ENCODE measurements at regions of chr2 and their contacts with region 1.

Region 1: DNA sequence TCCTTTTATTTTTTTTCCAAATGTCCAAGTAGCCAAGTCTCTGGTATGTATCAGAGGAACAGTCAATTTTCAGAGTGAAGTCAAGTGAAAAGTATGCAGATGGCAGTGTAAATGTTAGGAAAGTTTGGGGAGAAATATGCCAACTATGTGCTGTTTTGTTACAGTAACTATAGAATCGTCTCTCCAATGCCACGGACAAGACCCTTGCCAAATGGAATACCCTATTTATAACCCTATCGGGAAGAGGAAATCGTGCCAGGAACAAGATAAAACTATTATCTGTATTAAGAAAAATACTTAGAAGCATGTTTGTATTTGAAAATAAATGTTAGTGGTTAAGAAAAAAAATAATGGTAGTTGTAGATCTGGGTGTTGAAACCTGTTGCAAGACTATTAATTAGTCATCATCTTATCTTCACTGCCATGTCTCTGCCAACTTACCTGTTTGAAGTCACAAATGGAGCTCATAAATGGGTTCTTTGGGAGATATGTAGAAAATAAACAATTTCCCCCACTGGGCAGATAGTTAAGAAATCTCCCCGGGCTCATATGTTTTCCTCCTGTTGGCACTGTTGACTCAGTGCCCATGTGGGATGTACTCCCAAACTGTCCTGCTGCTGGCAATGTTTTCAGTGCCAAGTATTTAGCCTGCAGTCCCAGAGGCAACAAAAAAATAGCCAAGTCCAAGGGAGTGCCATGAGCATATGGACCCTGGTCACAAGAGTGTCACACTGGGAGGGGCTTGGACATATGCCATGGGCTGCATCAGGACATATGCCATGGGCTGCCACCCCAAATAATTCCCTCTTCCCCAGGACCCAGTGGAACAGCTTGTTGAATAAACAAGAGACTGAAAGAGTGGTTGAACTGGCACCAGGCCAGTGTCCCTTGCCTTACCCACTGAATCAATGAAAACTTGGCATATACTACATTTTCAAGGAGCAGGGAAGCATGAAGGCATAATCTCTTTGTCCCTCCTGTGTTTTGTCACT is 366.9 kb downstream of the OSR1 start:
- DNase-seq: no peak
- H3K4me3 ChIP-seq: no peak overlapping the region
- H3K27ac ChIP-seq: no peak overlapping the region
- H3K4me1 ChIP-seq: peaks cover 0 to 22% (median 10%) of the 10 kb centered on the region in 3 donors
- H3K27me3 ChIP-seq: no peaks in the 10 kb centered on the region
- CTCF ChIP-seq: no peak
- POLR2A ChIP-seq: no peak

Region 2: GRCh38 chr2:18788592-18788991 is 202.9 kb before region 1 on chr2:
- intact Hi-C with region 1: no loop called
- DNase-seq: no peak
- H3K4me3 ChIP-seq: no peak overlapping the region
- H3K27ac ChIP-seq: no peak overlapping the region
- H3K4me1 ChIP-seq: peaks cover 0 to 12% (median 0%) of the 10 kb centered on the region in 3 donors
- H3K27me3 ChIP-seq: no peaks in the 10 kb centered on the region
- CTCF ChIP-seq: no peak
- POLR2A ChIP-seq: no peak

Region 3: GRCh38 chr2:19349911-19350677 is 358.6 kb after region 1 on chr2:
- intact Hi-C with region 1: loop called (anchors 10 kb)
- DNase-seq: no peak
- H3K4me3 ChIP-seq: peak overlapping the region in 2 of 4 donors; percentile 21 to 49
- H3K27ac ChIP-seq: peak overlapping the region in 2 of 4 donors; percentile 17 to 51
- H3K4me1 ChIP-seq: peaks cover 7 to 39% (median 7%) of the 10 kb centered on the region in 3 donors
- H3K27me3 ChIP-seq: peaks cover 0 to 58% (median 3%) of the 10 kb centered on the region in 4 donors
- CTCF ChIP-seq: peak in 5 of 6 experiments; percentile 40 to 62 (median 55)
- POLR2A ChIP-seq: no peak